AG04449 (cell line): ENCODE measurements at regions of chr20 and their contacts with region 1.

Region 1: GRCh38 chr20:41173161-41173721 is 35.9 kb downstream of the PLCG1 start:
- DNase-seq: no peak
- H3K4me3 ChIP-seq: no peak overlapping the region
- CTCF ChIP-seq: peak; percentile 98

Region 2: GRCh38 chr20:40781327-40782042 is 391.8 kb before region 1 on chr20:
- CTCF ChIA-PET with region 1: no interaction called
- POLR2A ChIA-PET with region 1: no interaction called
- DNase-seq: no peak
- H3K4me3 ChIP-seq: no peak overlapping the region
- CTCF ChIP-seq: no peak

Region 3: DNA sequence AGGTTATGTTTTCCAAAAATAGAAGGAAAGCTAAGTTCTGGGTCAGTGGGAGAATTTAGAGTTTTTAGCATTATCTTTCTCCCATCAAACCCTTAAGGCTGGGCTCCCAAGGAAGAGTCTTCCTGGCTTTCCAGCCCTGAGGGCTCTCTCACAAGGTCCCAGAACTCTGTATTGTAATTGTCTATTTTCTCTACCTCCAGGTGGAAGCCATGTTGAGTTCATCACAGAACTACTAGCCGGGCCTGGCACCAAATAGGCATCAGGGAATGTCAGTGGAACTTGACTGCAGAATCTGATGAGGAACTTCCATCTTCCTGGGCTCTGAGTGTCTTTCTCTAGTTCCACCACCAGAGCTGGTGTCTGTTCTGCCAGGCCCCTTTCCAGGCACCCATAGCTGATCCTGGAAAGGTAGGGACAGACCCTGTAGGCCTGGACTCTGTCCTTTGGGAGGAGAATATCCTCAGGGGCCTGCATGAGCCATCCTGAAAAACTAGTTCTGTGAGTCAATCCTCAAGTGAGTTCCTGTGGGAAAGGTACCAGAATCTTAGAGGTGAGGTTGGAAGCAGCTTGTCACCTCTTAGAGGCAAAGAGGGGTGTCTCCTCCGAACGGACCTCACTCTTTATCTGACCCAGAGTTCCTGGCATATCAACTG is 155.7 kb before region 1 on chr20:
- CTCF ChIA-PET with region 1: no interaction called
- POLR2A ChIA-PET with region 1: no interaction called
- DNase-seq: no peak
- H3K4me3 ChIP-seq: no peak overlapping the region
- CTCF ChIP-seq: no peak

Region 4: DNA sequence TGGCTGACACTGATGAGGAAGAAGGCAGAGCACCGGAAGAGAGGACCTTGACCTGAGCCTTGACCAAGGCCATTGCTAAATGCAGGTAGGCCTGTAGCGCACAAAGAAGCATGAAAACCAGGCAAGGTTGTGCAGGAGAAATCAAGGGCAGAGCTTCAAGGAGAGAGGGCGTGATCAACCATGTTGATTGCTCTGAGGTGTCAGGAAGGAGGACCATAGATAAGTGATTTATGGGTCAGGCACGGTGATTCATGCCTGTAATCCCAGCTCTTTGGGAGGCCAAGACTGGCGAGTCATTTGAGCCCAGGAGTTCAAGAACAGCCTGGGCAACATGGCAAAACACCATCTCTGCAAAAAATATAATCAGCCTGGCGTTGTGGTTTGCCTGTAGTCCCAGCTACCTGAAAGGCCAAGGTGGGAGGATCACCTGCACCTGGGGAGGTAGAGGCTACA is 23.5 kb before region 1 on chr20:
- CTCF ChIA-PET with region 1: interaction called, 126 read pairs
- POLR2A ChIA-PET with region 1: interaction called, 3 read pairs
- DNase-seq: no peak
- H3K4me3 ChIP-seq: no peak overlapping the region
- CTCF ChIP-seq: no peak

Region 5: GRCh38 chr20:41200446-41201202 is 27.4 kb after region 1 on chr20:
- CTCF ChIA-PET with region 1: interaction called, 23 read pairs
- POLR2A ChIA-PET with region 1: no interaction called
- DNase-seq: no peak
- H3K4me3 ChIP-seq: no peak overlapping the region
- CTCF ChIP-seq: no peak

Region 6: GRCh38 chr20:41232973-41233926 is 60.0 kb after region 1 on chr20:
- CTCF ChIA-PET with region 1: interaction called, 74 read pairs
- POLR2A ChIA-PET with region 1: no interaction called
- DNase-seq: peak; percentile 77
- H3K4me3 ChIP-seq: peak overlapping the region; percentile 23
- CTCF ChIP-seq: no peak

Region 7: GRCh38 chr20:41411391-41411847 is 238.2 kb after region 1 on chr20:
- CTCF ChIA-PET with region 1: interaction called, 59 read pairs
- POLR2A ChIA-PET with region 1: no interaction called
- DNase-seq: no peak
- H3K4me3 ChIP-seq: no peak overlapping the region
- CTCF ChIP-seq: peak; percentile 19

Region 8: DNA sequence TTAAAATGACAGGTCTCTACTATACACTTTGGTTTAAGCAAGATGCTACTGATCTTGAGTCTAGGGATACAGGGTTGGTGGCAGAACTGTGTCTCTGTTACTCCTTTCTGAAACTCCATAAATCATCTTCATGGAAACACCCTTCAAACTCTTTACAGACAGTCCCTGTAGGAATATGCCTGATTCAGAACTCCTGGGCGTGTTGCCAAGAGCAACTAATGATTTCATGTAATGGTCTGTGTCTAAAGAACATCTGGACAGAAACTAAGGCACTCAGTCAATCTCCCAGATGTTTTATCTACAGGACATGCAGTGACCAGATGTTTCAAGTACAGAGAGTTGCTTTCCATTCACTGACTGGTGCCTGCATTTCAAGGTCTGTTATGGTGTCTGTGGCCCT is 909.4 kb after region 1 on chr20:
- CTCF ChIA-PET with region 1: no interaction called
- POLR2A ChIA-PET with region 1: no interaction called
- DNase-seq: no peak
- H3K4me3 ChIP-seq: no peak overlapping the region
- CTCF ChIP-seq: no peak